CD4-positive, alpha-beta memory T cell (primary cell): ENCODE measurements at regions of chr1 and their contacts with region 1.

Region 1: DNA sequence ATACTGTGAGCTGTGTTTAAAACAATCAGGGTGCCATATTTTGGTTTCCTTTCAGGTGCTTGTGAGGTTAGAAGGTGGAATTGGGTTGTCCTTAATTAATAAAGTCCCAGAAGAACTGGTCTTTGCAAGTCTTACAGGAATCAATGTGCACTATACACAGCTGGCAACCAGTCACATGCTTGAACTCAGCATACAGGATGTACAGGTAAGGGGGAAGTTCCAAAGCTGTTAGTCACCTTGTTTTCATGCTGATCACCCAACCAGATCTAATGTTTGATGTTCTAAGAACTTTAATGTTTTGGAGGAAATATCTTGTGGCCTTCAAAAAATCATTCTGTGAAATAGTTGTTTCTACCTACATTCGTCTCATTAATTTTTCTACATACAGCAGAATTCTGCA is 156.3 kb downstream of the VPS13D start:
- DNase-seq: peak; percentile 30 to 84 (median 52)
- H3K4me3 ChIP-seq: peak overlapping the region in 1 of 2 donors; percentile 40
- H3K4me3 Mint-ChIP-seq: peak overlapping the region; percentile 42 to 80 (median 72)
- H3K27ac ChIP-seq: peak overlapping the region; percentile 58
- H3K27ac Mint-ChIP-seq: peak overlapping the region; percentile 82 to 96 (median 92)
- H3K4me1 ChIP-seq: peaks cover 48% of the 10 kb centered on the region
- H3K4me1 Mint-ChIP-seq: peaks cover 42 to 79% (median 52%) of the 10 kb centered on the region in 4 donors
- H3K27me3 ChIP-seq: no peaks in the 10 kb centered on the region
- H3K27me3 Mint-ChIP-seq: no peaks in the 10 kb centered on the region

Region 2: GRCh38 chr1:12344596-12345349 is 41.4 kb before region 1 on chr1:
- CTCF ChIA-PET with region 1: interaction called, 4 read pairs
- POLR2A ChIA-PET with region 1: interaction called, 12 read pairs
- intact Hi-C with region 1: no loop called
- DNase-seq: peak in 4 of 5 donors; percentile 5 to 51 (median 12)
- H3K4me3 ChIP-seq: peak overlapping the region in 1 of 2 donors; percentile 1
- H3K4me3 Mint-ChIP-seq: peak overlapping the region; percentile 78 to 91 (median 84)
- H3K27ac ChIP-seq: peak overlapping the region; percentile 51
- H3K27ac Mint-ChIP-seq: peak overlapping the region; percentile 90 to 98 (median 97)
- H3K4me1 ChIP-seq: peaks cover 51% of the 10 kb centered on the region
- H3K4me1 Mint-ChIP-seq: peaks cover 48 to 64% (median 57%) of the 10 kb centered on the region in 4 donors
- H3K27me3 ChIP-seq: no peaks in the 10 kb centered on the region
- H3K27me3 Mint-ChIP-seq: no peaks in the 10 kb centered on the region

Region 3: DNA sequence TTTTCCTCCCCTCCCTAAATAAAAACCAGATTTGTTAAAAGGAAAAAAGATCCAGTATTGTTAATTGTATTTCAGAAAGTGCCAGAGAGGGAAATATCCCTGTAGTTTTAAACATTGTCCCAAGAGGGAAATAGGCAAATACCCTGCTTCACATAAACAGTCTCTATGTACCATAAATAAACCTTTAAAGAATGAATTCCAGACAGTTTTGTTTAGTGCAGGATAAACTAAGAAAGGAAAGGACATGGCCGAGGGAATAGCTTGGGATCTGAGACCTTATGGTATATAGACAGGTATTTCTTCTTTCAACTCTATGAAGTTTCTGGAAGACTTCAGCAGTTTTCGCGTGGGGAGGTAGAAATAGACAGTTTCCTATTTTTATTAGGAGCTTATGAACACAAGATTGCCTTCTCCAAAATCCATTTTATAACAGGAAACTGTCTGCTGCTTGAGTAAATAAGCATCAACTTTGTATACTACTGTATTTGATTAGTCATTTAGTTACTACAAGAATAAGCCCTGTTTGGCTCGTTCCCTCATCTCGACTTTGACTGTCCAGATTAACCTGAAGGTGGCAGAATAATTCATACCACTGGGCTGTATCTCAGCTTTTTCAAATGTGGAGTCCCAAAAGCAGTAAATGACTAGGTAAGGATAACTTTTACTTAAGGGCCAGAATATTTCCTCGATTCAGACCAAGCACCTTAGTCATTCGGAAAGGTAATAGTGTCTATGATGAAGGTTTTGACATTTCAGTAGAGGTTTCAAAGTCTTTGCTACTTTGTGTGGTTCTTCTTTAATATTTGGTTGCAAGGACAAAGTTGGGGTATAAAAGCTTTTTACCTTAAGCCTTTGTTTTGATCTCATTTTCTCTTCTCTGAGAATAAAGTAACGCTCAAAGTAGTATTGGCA is 21.2 kb after region 1 on chr1:
- CTCF ChIA-PET with region 1: interaction called, 5 read pairs
- POLR2A ChIA-PET with region 1: interaction called, 15 read pairs
- intact Hi-C with region 1: no loop called
- DNase-seq: peak in 3 of 5 donors; percentile 25 to 31 (median 27)
- H3K4me3 ChIP-seq: no peak overlapping the region
- H3K4me3 Mint-ChIP-seq: no peak overlapping the region
- H3K27ac ChIP-seq: no peak overlapping the region
- H3K27ac Mint-ChIP-seq: peak overlapping the region in 2 of 7 donors; percentile 58 to 72
- H3K4me1 ChIP-seq: no peaks in the 10 kb centered on the region
- H3K4me1 Mint-ChIP-seq: peaks cover 0 to 10% (median 8%) of the 10 kb centered on the region in 4 donors
- H3K27me3 ChIP-seq: no peaks in the 10 kb centered on the region
- H3K27me3 Mint-ChIP-seq: no peaks in the 10 kb centered on the region

Region 4: GRCh38 chr1:12434174-12434573 is 48.0 kb after region 1 on chr1:
- CTCF ChIA-PET with region 1: no interaction called
- POLR2A ChIA-PET with region 1: interaction called, 24 read pairs
- intact Hi-C with region 1: loop called (anchors 5 kb)
- DNase-seq: peak; percentile 29 to 74 (median 41)
- H3K4me3 ChIP-seq: peak overlapping the region in 1 of 2 donors; percentile 9
- H3K4me3 Mint-ChIP-seq: peak overlapping the region in 7 of 8 donors; percentile 42 to 83 (median 78)
- H3K27ac ChIP-seq: peak overlapping the region; percentile 4
- H3K27ac Mint-ChIP-seq: peak overlapping the region; percentile 83 to 94 (median 90)
- H3K4me1 ChIP-seq: peaks cover 59% of the 10 kb centered on the region
- H3K4me1 Mint-ChIP-seq: peaks cover 47 to 78% (median 57%) of the 10 kb centered on the region in 4 donors
- H3K27me3 ChIP-seq: no peaks in the 10 kb centered on the region
- H3K27me3 Mint-ChIP-seq: no peaks in the 10 kb centered on the region

Region 5: DNA sequence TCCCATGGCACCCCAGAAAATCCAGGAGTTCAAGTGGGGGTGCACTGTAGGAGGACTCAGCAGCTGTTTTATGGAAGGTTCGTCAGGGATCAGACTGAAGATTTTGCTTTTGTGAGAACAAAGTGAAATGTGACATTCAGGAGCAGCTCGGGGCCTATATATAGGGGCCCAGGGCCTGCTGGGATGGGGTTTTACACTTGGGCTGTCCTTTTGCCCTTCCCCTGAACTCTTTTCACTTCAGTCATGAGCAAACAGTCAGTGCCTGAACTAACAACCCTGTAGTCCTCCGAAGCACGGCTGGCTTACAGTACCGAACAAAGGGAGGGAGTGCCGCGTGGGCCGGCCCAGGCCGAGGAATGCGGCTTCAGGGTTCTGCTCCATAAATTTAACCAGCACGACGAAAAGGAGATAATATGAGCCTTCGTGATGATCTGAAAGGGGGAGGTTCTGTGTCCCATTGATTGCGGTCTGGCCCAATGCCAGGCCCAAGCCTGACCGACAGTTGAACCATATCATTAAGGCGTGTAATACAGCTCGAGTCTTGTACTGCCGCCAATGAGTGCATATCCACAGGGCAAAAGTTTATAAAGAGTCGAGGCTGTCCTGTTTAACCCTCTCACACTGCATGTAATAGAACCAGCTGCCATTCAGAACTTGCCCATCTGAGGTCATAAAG is 91.9 kb after region 1 on chr1:
- CTCF ChIA-PET with region 1: no interaction called
- POLR2A ChIA-PET with region 1: interaction called, 15 read pairs
- intact Hi-C with region 1: no loop called
- DNase-seq: peak in 3 of 5 donors; percentile 9 to 53 (median 22)
- H3K4me3 ChIP-seq: peak overlapping the region in 1 of 2 donors; percentile 9
- H3K4me3 Mint-ChIP-seq: peak overlapping the region in 7 of 8 donors; percentile 59 to 84 (median 78)
- H3K27ac ChIP-seq: peak overlapping the region; percentile 38
- H3K27ac Mint-ChIP-seq: peak overlapping the region; percentile 89 to 94 (median 92)
- H3K4me1 ChIP-seq: peaks cover 93% of the 10 kb centered on the region
- H3K4me1 Mint-ChIP-seq: peaks cover 69 to 92% (median 81%) of the 10 kb centered on the region in 4 donors
- H3K27me3 ChIP-seq: no peaks in the 10 kb centered on the region
- H3K27me3 Mint-ChIP-seq: no peaks in the 10 kb centered on the region